Naive thymus-derived CD4-positive, alpha-beta T cell (primary cell): ENCODE measurements at regions of chr19 and their contacts with region 1.

Region 1: DNA sequence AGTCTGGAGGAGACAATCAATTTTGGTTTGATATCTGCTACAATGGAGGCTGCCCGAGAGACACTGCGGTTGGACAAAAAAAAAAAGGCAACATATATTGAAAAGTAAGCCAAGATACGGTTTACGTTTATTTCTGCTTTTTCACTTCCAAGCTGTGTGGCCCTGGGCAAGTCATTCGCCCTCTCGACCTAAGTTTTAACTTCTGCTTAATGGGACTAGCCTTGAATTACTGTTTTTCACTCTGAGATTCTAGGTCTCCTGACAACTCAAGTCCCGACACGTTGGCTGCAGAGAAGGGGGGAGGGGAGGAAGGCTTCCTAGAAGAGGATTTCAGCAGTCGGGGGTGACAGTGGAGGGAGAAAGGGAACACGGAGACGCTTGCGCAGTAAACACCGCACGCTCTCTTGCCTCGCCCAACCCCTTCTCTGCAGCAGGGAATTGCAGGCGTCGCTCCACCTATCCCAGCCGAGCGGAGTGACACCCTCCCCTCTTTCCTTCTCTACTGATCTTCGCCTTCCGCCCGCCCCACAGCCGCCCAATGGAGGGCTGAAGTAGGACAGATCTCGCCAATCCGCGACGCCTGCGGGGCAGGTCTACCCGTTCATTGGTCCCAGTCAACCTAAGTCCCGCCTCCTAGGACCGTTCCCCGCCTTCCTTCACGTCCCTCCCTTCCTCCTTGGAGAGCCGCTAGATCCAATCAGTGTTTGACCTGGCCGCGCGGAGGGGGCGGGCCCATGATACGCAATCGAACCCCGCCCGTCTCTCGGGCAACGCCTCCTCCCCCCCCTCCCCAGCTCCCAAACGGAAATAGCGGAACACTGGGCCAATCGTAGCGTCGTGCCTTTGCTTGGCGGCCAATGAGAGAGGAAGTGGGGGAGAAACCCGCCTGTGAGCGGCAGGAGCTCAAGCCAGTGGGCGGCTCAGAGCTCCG is 529 bp upstream of the AP2A1 start:
- DNase-seq: peak; percentile 86 to 100 (median 99)
- ATAC-seq: peak; percentile 92
- H3K4me3 ChIP-seq: peak overlapping the region; percentile 79
- H3K4me3 Mint-ChIP-seq: peak overlapping the region; percentile 89 to 98 (median 96)
- H3K27ac ChIP-seq: peak overlapping the region; percentile 80
- H3K27ac Mint-ChIP-seq: peak overlapping the region; percentile 84 to 98 (median 96)
- H3K4me1 ChIP-seq: peaks cover 11 to 16% of the 10 kb centered on the region in 2 donors
- H3K4me1 Mint-ChIP-seq: peaks cover 15 to 43% (median 36%) of the 10 kb centered on the region in 7 donors
- H3K27me3 ChIP-seq: no peaks in the 10 kb centered on the region
- H3K27me3 Mint-ChIP-seq: no peaks in the 10 kb centered on the region

Region 2: GRCh38 chr19:48445606-48446481 is 1320.4 kb before region 1 on chr19 and contains the start of gene GRWD1:
- CTCF ChIA-PET with region 1: no interaction called
- POLR2A ChIA-PET with region 1: no interaction called
- intact Hi-C with region 1: loop called in 1 of 2 experiments (anchors 2 kb)
- DNase-seq: peak; percentile 63 to 98 (median 93)
- ATAC-seq: peak; percentile 95
- H3K4me3 ChIP-seq: peak within 1 kb of the TSS; percentile 80
- H3K4me3 Mint-ChIP-seq: peak within 1 kb of the TSS; percentile 87 to 96 (median 93)
- H3K27ac ChIP-seq: peak within 1 kb of the TSS; percentile 83
- H3K27ac Mint-ChIP-seq: peak within 1 kb of the TSS; percentile 90 to 98 (median 95)
- H3K4me1 ChIP-seq: peaks cover 20 to 22% of the 10 kb centered on the region in 2 donors
- H3K4me1 Mint-ChIP-seq: peaks cover 19 to 44% (median 37%) of the 10 kb centered on the region in 7 donors
- H3K27me3 ChIP-seq: peaks cover 0 to 8% of the 10 kb centered on the region in 2 donors
- H3K27me3 Mint-ChIP-seq: peaks cover 12 to 33% (median 21%) of the 10 kb centered on the region in 5 donors
- total RNA-seq, gene GRWD1: 26.1 to 45.8 (median 36.3) TPM

Region 3: GRCh38 chr19:48624067-48624594 is 1142.1 kb before region 1 on chr19:
- CTCF ChIA-PET with region 1: no interaction called
- POLR2A ChIA-PET with region 1: no interaction called
- intact Hi-C with region 1: no loop called
- DNase-seq: peak; percentile 83 to 97 (median 87)
- ATAC-seq: peak; percentile 86
- H3K4me3 ChIP-seq: peak overlapping the region; percentile 29
- H3K4me3 Mint-ChIP-seq: peak overlapping the region; percentile 76 to 98 (median 88)
- H3K27ac ChIP-seq: peak overlapping the region; percentile 73
- H3K27ac Mint-ChIP-seq: peak overlapping the region; percentile 86 to 99 (median 92)
- H3K4me1 ChIP-seq: peaks cover 14 to 24% of the 10 kb centered on the region in 2 donors
- H3K4me1 Mint-ChIP-seq: peaks cover 31 to 51% (median 44%) of the 10 kb centered on the region in 7 donors
- H3K27me3 ChIP-seq: no peaks in the 10 kb centered on the region
- H3K27me3 Mint-ChIP-seq: no peaks in the 10 kb centered on the region

Region 4: GRCh38 chr19:49590071-49590970 is 176.0 kb before region 1 on chr19:
- CTCF ChIA-PET with region 1: no interaction called
- POLR2A ChIA-PET with region 1: no interaction called
- intact Hi-C with region 1: loop called (anchors 1 kb)
- DNase-seq: peak; percentile 85 to 98 (median 97)
- ATAC-seq: peak; percentile 90
- H3K4me3 ChIP-seq: peak overlapping the region; percentile 97
- H3K4me3 Mint-ChIP-seq: peak overlapping the region; percentile 85 to 95 (median 94)
- H3K27ac ChIP-seq: peak overlapping the region; percentile 86
- H3K27ac Mint-ChIP-seq: peak overlapping the region; percentile 76 to 95 (median 93)
- H3K4me1 ChIP-seq: peaks cover 15 to 18% of the 10 kb centered on the region in 2 donors
- H3K4me1 Mint-ChIP-seq: peaks cover 26 to 42% (median 31%) of the 10 kb centered on the region in 7 donors
- H3K27me3 ChIP-seq: no peaks in the 10 kb centered on the region
- H3K27me3 Mint-ChIP-seq: peaks cover 0 to 12% (median 0%) of the 10 kb centered on the region in 5 donors

Region 5: DNA sequence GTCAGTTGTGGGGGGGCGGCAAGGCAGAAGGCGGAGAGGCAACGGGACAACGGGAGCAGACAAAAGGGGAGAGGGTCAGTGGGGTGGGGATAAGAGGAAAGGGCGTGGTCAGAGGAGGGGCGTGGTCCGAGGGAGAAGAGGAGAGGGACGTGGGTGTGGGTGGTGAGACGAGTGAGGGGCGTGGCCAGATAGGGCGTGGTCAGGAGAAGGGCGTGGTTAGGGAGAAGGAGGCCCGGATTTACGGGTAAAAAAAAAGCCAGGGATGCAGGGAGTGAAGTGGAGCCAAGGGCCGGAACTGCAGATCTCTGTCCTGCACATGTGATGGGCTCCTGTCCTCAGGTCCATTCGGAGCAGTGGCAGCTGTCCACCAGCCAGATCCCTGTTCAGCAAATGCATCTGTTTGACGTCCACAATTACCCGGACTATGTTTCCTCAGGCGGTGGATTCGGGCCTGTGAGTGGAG is 53.8 kb before region 1 on chr19:
- CTCF ChIA-PET with region 1: no interaction called
- POLR2A ChIA-PET with region 1: interaction called, 23 read pairs
- intact Hi-C with region 1: loop called in 1 of 2 experiments (anchors 1 kb)
- DNase-seq: no peak
- ATAC-seq: no peak
- H3K4me3 ChIP-seq: no peak overlapping the region
- H3K4me3 Mint-ChIP-seq: no peak overlapping the region
- H3K27ac ChIP-seq: no peak overlapping the region
- H3K27ac Mint-ChIP-seq: peak overlapping the region in 1 of 9 donors; percentile 83
- H3K4me1 ChIP-seq: peaks cover 0 to 2% of the 10 kb centered on the region in 2 donors
- H3K4me1 Mint-ChIP-seq: peaks cover 3 to 12% (median 4%) of the 10 kb centered on the region in 7 donors
- H3K27me3 ChIP-seq: no peaks in the 10 kb centered on the region
- H3K27me3 Mint-ChIP-seq: peaks cover 0 to 4% (median 0%) of the 10 kb centered on the region in 5 donors

Region 6: DNA sequence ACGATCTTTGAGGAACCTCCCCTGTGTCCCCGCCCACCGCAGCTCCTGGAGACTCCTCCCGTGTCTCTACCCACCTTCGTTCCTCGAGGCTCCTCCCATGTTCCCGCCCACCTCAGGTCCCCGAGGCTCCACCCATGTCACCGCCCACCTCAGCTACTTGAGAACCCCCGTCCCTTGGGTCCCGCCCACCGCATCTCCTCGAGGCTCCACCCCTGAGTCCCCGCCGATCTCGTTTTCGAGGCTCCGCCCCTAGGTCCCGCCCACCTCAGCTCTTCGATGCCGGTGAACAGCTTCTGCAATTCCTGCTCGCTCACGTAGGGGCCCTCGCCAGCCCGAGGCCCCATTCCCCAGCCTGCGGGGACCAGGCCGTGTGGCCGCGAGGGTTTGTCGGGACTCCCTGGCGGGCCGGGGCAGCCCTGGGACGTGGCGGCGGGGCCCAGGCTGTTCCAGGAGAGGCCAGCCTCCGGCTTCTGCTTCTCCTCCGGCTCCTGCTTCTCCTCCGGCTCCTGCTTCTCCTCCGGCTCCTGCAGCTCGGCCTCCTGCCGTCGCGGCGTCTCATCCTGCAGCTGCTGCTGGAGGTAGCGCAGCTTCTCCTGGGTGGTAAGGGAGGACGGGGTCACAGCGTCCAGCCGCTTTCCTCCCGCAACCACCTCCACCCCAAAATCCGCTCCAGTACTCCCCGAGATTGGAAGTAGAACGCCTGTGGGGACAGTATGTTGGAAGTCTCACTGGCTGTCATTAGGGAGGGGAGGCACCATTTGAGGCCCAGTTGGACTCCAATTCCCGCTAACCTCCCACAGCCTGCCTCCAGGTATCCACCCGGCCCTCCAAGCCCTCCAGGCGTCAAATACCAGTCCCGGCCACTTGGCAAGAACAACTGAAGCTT is 19.8 kb before region 1 on chr19:
- CTCF ChIA-PET with region 1: no interaction called
- POLR2A ChIA-PET with region 1: no interaction called
- intact Hi-C with region 1: no loop called
- DNase-seq: peak in 7 of 9 donors; percentile 24 to 54 (median 33)
- ATAC-seq: peak; percentile 87
- H3K4me3 ChIP-seq: no peak overlapping the region
- H3K4me3 Mint-ChIP-seq: peak overlapping the region in 3 of 10 donors; percentile 25 to 31 (median 29)
- H3K27ac ChIP-seq: no peak overlapping the region
- H3K27ac Mint-ChIP-seq: peak overlapping the region in 1 of 9 donors; percentile 53
- H3K4me1 ChIP-seq: no peaks in the 10 kb centered on the region
- H3K4me1 Mint-ChIP-seq: peaks cover 0 to 6% (median 0%) of the 10 kb centered on the region in 7 donors
- H3K27me3 ChIP-seq: no peaks in the 10 kb centered on the region
- H3K27me3 Mint-ChIP-seq: no peaks in the 10 kb centered on the region

Region 7: DNA sequence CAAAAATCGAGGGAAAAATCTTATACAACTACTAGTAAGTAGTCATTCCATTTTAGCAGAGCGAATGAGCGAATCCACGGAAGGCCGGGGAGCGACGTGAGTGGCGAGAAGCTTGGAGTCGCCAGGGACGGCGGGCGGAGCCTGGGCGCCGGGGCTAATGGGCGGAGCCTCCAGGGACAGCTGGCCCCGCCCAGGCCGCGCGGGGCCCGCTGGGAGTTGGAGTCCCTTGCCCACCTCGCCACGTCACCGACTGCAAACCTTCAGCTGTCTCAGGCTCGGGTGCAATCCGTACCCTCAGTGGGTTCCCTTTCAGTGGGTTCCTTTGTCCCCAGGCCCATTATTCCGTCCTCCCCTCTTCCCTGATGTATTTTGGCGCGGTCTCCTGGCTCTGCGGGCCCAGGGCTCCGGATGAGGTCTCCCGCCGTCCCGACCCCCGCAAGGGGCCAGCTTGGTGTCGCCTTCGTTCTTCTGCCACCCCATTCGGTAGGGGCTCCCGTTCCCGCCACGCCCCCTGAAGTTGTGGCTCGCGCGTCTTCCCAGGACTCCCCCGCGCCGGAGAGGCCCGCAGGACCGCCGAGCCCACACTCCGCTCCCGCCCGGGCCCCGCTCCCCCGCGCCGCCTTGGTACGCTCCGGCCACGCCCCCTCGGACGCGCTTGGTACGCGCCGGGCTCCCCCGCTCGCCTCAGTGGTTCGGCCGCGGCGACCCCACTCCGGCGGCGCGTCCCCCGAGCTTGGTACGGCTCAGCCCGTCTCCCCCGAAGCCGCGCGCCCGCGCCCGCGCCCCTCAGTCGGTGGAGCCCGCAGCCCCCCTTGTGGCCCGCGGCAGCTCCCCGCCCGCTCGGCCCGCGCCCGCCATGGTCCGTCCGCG is 84.4 kb after region 1 on chr19 and contains the start of gene PTOV1:
- CTCF ChIA-PET with region 1: no interaction called
- POLR2A ChIA-PET with region 1: interaction called, 3 read pairs
- intact Hi-C with region 1: loop called (anchors 1 kb)
- DNase-seq: peak; percentile 78 to 97 (median 88)
- ATAC-seq: peak; percentile 93
- H3K4me3 ChIP-seq: peak within 1 kb of the TSS; percentile 89
- H3K4me3 Mint-ChIP-seq: peak within 1 kb of the TSS; percentile 91 to 96 (median 92)
- H3K27ac ChIP-seq: peak within 1 kb of the TSS; percentile 99
- H3K27ac Mint-ChIP-seq: peak within 1 kb of the TSS; percentile 85 to 98 (median 95)
- H3K4me1 ChIP-seq: peaks cover 7 to 25% of the 10 kb centered on the region in 2 donors
- H3K4me1 Mint-ChIP-seq: peaks cover 22 to 37% (median 33%) of the 10 kb centered on the region in 7 donors
- H3K27me3 ChIP-seq: no peaks in the 10 kb centered on the region
- H3K27me3 Mint-ChIP-seq: peaks cover 0 to 11% (median 0%) of the 10 kb centered on the region in 5 donors
- total RNA-seq, gene PTOV1: 92.8 to 170 (median 160) TPM

Region 8: DNA sequence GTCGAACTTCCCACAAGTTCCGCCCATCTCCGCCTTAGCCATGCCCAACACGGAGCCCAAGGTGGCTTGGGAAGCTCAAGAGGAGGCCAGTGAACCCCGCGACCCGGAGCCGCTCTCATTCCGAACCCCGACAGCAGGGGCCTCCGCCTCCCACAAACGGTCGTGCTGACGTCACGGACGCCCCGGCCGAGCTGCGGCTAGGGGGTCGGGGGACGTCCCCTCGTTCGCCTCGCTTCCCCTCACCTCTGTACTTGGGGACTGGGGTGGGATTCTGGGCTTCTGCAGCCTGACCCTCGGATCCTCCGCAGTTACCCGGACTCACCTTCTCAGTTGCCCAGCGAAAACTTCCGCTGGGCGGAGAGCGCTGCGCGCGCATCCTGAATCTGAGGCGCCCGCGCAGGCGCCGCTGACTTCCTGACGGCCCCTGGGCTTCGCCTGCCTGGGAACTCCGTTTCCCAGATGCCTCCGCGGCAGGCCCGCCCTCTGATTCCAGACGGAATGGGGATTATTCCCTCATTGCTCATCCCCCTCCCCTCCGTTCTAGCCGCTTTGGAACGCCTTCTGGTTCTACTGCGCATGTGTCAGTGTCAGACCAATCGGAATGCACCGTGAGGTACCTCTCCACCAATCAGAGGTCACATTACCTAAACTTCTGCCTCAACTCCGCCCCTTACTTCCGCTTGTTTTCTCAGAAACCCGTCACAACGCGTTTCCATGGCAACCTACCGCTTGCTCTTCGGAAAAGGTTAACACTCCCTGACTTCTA is 258.9 kb after region 1 on chr19 and contains the start of gene VRK3:
- CTCF ChIA-PET with region 1: no interaction called
- POLR2A ChIA-PET with region 1: no interaction called
- intact Hi-C with region 1: loop called (anchors 1 kb)
- DNase-seq: peak; percentile 93 to 100 (median 99)
- ATAC-seq: peak; percentile 91
- H3K4me3 ChIP-seq: peak within 1 kb of the TSS; percentile 85
- H3K4me3 Mint-ChIP-seq: peak within 1 kb of the TSS; percentile 93 to 99 (median 94)
- H3K27ac ChIP-seq: peak within 1 kb of the TSS; percentile 96
- H3K27ac Mint-ChIP-seq: peak within 1 kb of the TSS; percentile 98 to 100 (median 99)
- H3K4me1 ChIP-seq: peaks cover 19 to 29% of the 10 kb centered on the region in 2 donors
- H3K4me1 Mint-ChIP-seq: peaks cover 30 to 73% (median 58%) of the 10 kb centered on the region in 7 donors
- H3K27me3 ChIP-seq: no peaks in the 10 kb centered on the region
- H3K27me3 Mint-ChIP-seq: peaks cover 0 to 6% (median 0%) of the 10 kb centered on the region in 5 donors
- total RNA-seq, gene VRK3: 70.6 to 121 (median 84.7) TPM